Naive thymus-derived CD4-positive, alpha-beta T cell (primary cell): ENCODE measurements at regions of chr5 and their contacts with region 1.

Region 1: GRCh38 chr5:157189223-157189622 is 8.6 kb downstream of the ITK start:
- DNase-seq: no peak
- ATAC-seq: no peak
- H3K4me3 ChIP-seq: peak overlapping the region; percentile 68
- H3K4me3 Mint-ChIP-seq: peak overlapping the region; percentile 83 to 100 (median 96)
- H3K27ac ChIP-seq: peak overlapping the region; percentile 81
- H3K27ac Mint-ChIP-seq: peak overlapping the region; percentile 63 to 98 (median 91)
- H3K4me1 ChIP-seq: peaks cover 75 to 81% of the 10 kb centered on the region in 2 donors
- H3K4me1 Mint-ChIP-seq: peaks cover 56 to 94% (median 83%) of the 10 kb centered on the region in 7 donors
- H3K27me3 ChIP-seq: no peaks in the 10 kb centered on the region
- H3K27me3 Mint-ChIP-seq: no peaks in the 10 kb centered on the region

Region 2: GRCh38 chr5:157108976-157109375 is 80.2 kb before region 1 on chr5 and contains the start of gene HAVCR2:
- CTCF ChIA-PET with region 1: no interaction called
- POLR2A ChIA-PET with region 1: no interaction called
- intact Hi-C with region 1: loop called in 1 of 2 experiments (anchors 10 kb)
- DNase-seq: peak; percentile 20 to 73 (median 57)
- ATAC-seq: peak; percentile 90
- H3K4me3 ChIP-seq: peak within 1 kb of the TSS; percentile 27
- H3K4me3 Mint-ChIP-seq: peak within 1 kb of the TSS; percentile 81 to 97 (median 85)
- H3K27ac ChIP-seq: peak within 1 kb of the TSS; percentile 55
- H3K27ac Mint-ChIP-seq: peak within 1 kb of the TSS; percentile 82 to 96 (median 92)
- H3K4me1 ChIP-seq: peaks cover 19 to 22% of the 10 kb centered on the region in 2 donors
- H3K4me1 Mint-ChIP-seq: peaks cover 16 to 68% (median 47%) of the 10 kb centered on the region in 7 donors
- H3K27me3 ChIP-seq: no peaks in the 10 kb centered on the region
- H3K27me3 Mint-ChIP-seq: no peaks in the 10 kb centered on the region
- total RNA-seq, gene HAVCR2: 5.1 to 110 (median 5.5) TPM

Region 3: DNA sequence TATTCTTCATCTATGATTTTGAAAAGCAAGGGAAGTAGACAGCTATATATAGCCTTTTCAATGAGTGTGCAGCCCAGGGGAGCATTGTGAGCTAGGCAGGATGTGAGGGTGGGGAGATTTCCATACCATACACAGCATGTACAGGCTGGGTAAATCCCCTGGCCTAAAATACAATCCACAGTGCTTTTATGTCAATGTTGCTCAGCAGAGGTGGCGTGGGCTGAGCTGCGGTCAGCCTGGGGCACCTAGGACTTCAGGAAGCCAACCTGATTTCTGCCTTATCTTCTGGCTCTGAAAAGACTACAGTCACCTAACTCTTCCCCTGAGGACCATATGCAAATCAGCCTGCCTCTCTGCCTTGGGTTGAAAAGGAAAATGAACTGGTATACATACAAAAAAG is 16.8 kb before region 1 on chr5:
- CTCF ChIA-PET with region 1: interaction called, 4 read pairs
- POLR2A ChIA-PET with region 1: interaction called, 345 read pairs
- intact Hi-C with region 1: loop called in 1 of 2 experiments (anchors 1 kb)
- DNase-seq: peak; percentile 21 to 90 (median 75)
- ATAC-seq: peak; percentile 98
- H3K4me3 ChIP-seq: peak overlapping the region; percentile 33
- H3K4me3 Mint-ChIP-seq: peak overlapping the region; percentile 49 to 82 (median 73)
- H3K27ac ChIP-seq: peak overlapping the region; percentile 80
- H3K27ac Mint-ChIP-seq: peak overlapping the region; percentile 83 to 96 (median 94)
- H3K4me1 ChIP-seq: peaks cover 20 to 35% of the 10 kb centered on the region in 2 donors
- H3K4me1 Mint-ChIP-seq: peaks cover 33 to 91% (median 73%) of the 10 kb centered on the region in 7 donors
- H3K27me3 ChIP-seq: no peaks in the 10 kb centered on the region
- H3K27me3 Mint-ChIP-seq: no peaks in the 10 kb centered on the region

Region 4: GRCh38 chr5:157204765-157205164 is 15.5 kb after region 1 on chr5:
- CTCF ChIA-PET with region 1: interaction called, 11 read pairs
- POLR2A ChIA-PET with region 1: interaction called, 345 read pairs
- intact Hi-C with region 1: loop called in 1 of 2 experiments (anchors 1 kb)
- DNase-seq: peak in 7 of 9 donors; percentile 44 to 84 (median 73)
- ATAC-seq: peak; percentile 69
- H3K4me3 ChIP-seq: peak overlapping the region; percentile 10
- H3K4me3 Mint-ChIP-seq: peak overlapping the region; percentile 7 to 93 (median 76)
- H3K27ac ChIP-seq: peak overlapping the region; percentile 64
- H3K27ac Mint-ChIP-seq: peak overlapping the region; percentile 79 to 98 (median 95)
- H3K4me1 ChIP-seq: peaks cover 77 to 87% of the 10 kb centered on the region in 2 donors
- H3K4me1 Mint-ChIP-seq: peaks cover 43 to 96% (median 90%) of the 10 kb centered on the region in 7 donors
- H3K27me3 ChIP-seq: no peaks in the 10 kb centered on the region
- H3K27me3 Mint-ChIP-seq: no peaks in the 10 kb centered on the region

Region 5: DNA sequence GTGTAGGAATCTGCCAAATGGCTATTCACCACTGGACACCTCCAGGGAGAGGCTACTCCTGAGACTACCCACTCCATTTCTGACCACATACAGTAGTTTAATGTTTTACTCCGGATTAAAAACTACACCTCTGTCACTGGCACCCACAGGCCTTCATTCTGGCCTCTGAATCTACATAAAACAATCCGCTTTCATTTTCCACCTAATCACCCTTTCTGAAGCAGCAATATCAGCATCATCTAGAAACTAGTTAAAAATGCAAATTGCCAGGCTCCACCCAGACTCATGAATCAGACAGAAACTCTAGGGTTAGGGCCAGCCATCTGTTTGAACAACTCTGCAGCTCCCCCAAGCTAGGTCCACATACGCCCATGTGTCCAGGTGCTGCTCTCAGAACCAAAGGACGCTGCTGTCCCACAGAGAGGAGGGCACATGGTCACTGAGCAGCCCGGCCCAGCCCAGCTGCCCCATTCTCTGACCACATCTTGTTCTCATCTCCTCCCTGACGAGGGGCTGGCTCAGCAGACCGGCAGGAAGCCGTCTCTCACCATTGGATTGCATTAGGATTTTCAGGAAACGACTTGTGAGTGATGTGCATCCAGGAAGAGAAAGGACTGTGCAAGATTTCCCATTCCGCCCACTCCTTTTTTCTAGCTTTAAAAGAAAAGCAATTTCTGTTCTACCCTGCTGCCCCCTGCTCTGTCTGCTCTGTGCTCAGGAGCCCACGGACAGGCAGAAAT is 351.7 kb after region 1 on chr5:
- CTCF ChIA-PET with region 1: no interaction called
- POLR2A ChIA-PET with region 1: no interaction called
- intact Hi-C with region 1: loop called in 1 of 2 experiments (anchors 10 kb)
- DNase-seq: peak in 1 of 9 donors; percentile 57
- ATAC-seq: peak; percentile 51
- H3K4me3 ChIP-seq: peak overlapping the region; percentile 19
- H3K4me3 Mint-ChIP-seq: peak overlapping the region in 5 of 10 donors; percentile 7 to 81 (median 12)
- H3K27ac ChIP-seq: no peak overlapping the region
- H3K27ac Mint-ChIP-seq: peak overlapping the region in 7 of 9 donors; percentile 2 to 99 (median 45)
- H3K4me1 ChIP-seq: peaks cover 14 to 65% of the 10 kb centered on the region in 2 donors
- H3K4me1 Mint-ChIP-seq: peaks cover 12 to 92% (median 29%) of the 10 kb centered on the region in 7 donors
- H3K27me3 ChIP-seq: no peaks in the 10 kb centered on the region
- H3K27me3 Mint-ChIP-seq: no peaks in the 10 kb centered on the region